Colonic mucosa (tissue), 4 donors: ENCODE measurements at regions of chr22 and their contacts with region 1.

Region 1: GRCh38 chr22:45268958-45269844 is 15.5 kb upstream of the UPK3A start:
- DNase-seq: peak; percentile 87
- H3K4me3 ChIP-seq: peak overlapping the region; percentile 36
- H3K27ac ChIP-seq: no peak overlapping the region
- H3K4me1 ChIP-seq: peaks cover 18% of the 10 kb centered on the region
- H3K27me3 ChIP-seq: no peaks in the 10 kb centered on the region
- CTCF ChIP-seq: peak; percentile 82

Region 2: GRCh38 chr22:45435544-45436139 is 166.4 kb after region 1 on chr22:
- intact Hi-C with region 1: loop called (anchors 1 kb)
- DNase-seq: peak; percentile 92
- H3K4me3 ChIP-seq: no peak overlapping the region
- H3K27ac ChIP-seq: peak overlapping the region; percentile 53
- H3K4me1 ChIP-seq: no peaks in the 10 kb centered on the region
- H3K27me3 ChIP-seq: no peaks in the 10 kb centered on the region
- CTCF ChIP-seq: peak; percentile 98